Panc1 (cell line): ENCODE measurements at regions of chr19 and their contacts with region 1.

Region 1: DNA sequence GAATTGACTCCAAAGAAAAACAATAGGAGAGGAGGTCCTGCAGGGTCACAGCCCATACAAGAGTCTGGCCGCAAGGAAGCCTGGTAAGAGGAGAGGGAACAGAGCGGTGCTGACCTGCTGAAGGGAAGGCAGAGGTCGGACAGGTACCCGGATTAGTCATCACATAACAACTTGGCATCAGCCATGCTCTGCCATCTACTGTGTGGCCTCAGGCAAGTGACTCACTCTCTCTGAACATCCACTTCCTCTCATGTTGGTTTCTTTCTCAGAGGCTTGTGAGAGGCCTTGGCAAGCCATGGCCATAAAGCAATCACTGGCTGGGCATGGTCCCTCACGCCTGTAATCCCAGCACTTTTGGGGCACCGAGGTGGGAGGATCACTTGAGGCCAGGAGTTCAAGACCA is 7.4 kb upstream of the CAPNS1 start:
- DNase-seq: peak; percentile 72
- ATAC-seq: peak; percentile 71
- H3K4me3 ChIP-seq: no peak overlapping the region
- H3K27ac ChIP-seq: peak overlapping the region; percentile 57
- H3K4me1 ChIP-seq: peaks cover 32% of the 10 kb centered on the region
- H3K27me3 ChIP-seq: no peaks in the 10 kb centered on the region
- CTCF ChIP-seq: no peak

Region 2: DNA sequence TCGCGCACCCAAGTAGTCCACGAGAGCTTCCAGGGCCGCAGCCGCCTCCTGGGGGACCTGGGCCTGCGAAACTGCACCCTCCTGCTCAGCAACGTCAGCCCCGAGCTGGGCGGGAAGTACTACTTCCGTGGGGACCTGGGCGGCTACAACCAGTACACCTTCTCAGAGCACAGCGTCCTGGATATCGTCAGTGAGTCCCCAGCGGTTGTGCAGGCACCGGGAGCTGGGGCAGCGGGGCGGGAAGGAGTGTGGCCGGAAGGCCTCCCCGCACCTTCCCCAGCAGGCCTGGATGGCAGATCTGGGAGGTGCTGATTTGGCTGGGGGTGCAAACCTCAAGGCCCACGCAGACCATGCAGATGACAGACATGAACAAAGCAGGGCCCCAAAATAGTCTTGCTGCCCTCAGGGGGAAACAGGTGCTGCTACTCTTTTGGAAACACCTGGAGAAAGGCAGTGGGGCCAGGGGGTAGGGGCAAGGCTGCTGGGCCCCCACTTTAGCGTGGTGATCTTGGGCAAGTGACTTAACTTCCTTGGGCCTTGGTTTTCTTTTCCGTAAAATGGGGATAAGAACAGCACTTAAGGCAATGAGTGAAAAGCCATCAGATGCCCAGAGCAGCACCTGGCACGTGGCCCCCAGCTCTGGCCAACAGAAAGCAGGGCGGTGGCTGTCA is 836.6 kb before region 1 on chr19:
- CTCF ChIA-PET with region 1: no interaction called
- POLR2A ChIA-PET with region 1: no interaction called
- in situ Hi-C with region 1: no loop called
- intact Hi-C with region 1: no loop called
- DNase-seq: no peak
- ATAC-seq: peak; percentile 32
- H3K4me3 ChIP-seq: no peak overlapping the region
- H3K27ac ChIP-seq: no peak overlapping the region
- H3K4me1 ChIP-seq: no peaks in the 10 kb centered on the region
- H3K27me3 ChIP-seq: no peaks in the 10 kb centered on the region; the same call in 1 of the 2 replicates
- CTCF ChIP-seq: no peak

Region 3: DNA sequence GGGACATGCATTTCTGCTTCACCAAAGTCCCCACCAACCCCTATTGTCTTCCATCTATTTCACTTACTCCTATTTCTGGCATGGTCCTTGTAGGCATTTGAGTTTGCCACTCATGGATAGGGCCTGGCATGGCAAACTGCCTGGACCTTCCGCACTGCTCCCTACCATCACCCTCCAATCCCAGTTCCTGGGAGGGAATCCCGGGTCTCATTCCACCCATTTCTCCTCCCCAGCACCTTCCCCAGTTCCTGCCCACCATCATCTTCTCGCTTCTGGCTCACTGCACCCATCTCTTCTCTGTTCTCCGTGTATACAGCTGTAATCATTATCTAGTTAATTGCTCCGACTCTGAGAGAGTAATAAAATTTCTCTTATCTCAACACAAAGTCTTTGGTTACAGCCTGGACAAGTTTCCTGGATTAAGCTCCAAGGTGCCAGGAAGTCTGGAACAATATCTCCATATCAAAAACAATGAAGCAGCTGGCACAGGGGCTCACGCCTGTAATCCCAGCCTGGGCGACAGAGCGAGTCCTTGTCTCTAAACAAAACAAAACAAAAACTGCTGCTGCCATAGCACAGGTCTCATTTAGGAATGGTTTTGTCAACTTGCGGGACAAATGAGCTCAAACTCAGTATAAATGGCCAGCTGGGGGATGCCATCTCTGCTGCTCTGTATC is 36.7 kb after region 1 on chr19:
- CTCF ChIA-PET with region 1: interaction called, 7 read pairs
- POLR2A ChIA-PET with region 1: interaction called, 15 read pairs
- in situ Hi-C with region 1: no loop called
- intact Hi-C with region 1: loop called (anchors 1 kb)
- DNase-seq: no peak
- ATAC-seq: no peak; the same call in 1 of the 2 replicates
- H3K4me3 ChIP-seq: no peak overlapping the region
- H3K27ac ChIP-seq: no peak overlapping the region
- H3K4me1 ChIP-seq: 0 out of 2 replicates have a peak, but pooled peaks cover 2% of the 10 kb centered on the region
- H3K27me3 ChIP-seq: no peaks in the 10 kb centered on the region
- CTCF ChIP-seq: no peak

Region 4: GRCh38 chr19:36245210-36246005 is 112.9 kb after region 1 on chr19:
- CTCF ChIA-PET with region 1: interaction called, 11 read pairs
- POLR2A ChIA-PET with region 1: no interaction called
- in situ Hi-C with region 1: no loop called
- intact Hi-C with region 1: no loop called
- DNase-seq: no peak
- ATAC-seq: no peak; the same call in 1 of the 2 replicates
- H3K4me3 ChIP-seq: peak overlapping the region in 1 of 2 experiments; percentile 9; a peak in 2 of 4 replicates
- H3K27ac ChIP-seq: no peak overlapping the region
- H3K4me1 ChIP-seq: no peaks in the 10 kb centered on the region
- H3K27me3 ChIP-seq: no peaks in the 10 kb centered on the region
- CTCF ChIP-seq: no peak

Region 5: GRCh38 chr19:36257520-36257876 is 125.0 kb after region 1 on chr19:
- CTCF ChIA-PET with region 1: no interaction called
- POLR2A ChIA-PET with region 1: no interaction called
- in situ Hi-C with region 1: no loop called
- intact Hi-C with region 1: no loop called
- DNase-seq: no peak
- ATAC-seq: no peak
- H3K4me3 ChIP-seq: peak overlapping the region in 1 of 2 experiments; percentile 14; a peak in 1 of 4 replicates
- H3K27ac ChIP-seq: no peak overlapping the region
- H3K4me1 ChIP-seq: no peaks in the 10 kb centered on the region
- H3K27me3 ChIP-seq: no peaks in the 10 kb centered on the region
- CTCF ChIP-seq: no peak